ENCODE measurements at regions of chr14 and their contacts with region 1.

Region 1: DNA sequence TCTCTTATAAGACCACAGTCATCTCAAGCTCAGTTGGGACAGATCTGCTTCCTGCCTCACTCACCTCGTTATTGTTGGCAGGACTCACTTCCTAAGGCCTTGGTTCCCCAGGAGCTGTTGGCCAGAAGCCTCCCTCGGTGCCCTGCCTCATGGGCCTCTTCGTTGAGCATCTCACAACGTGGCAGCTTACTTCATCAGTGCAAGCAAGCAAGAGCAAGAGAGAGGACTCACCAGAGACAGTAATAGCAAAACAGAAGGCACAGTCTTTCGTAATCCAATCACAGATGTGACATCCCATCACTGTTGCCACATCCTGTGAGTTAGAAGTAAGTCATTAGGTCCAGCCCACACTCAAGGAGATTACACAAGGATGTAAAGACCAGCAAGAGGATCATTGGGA is 5.1 kb upstream of the NUMB start:
- DNase-seq: peak; percentile 56
- ATAC-seq: no peak
- H3K4me3 Mint-ChIP-seq: no peak overlapping the region
- H3K27ac Mint-ChIP-seq: peak overlapping the region; percentile 77
- H3K4me1 Mint-ChIP-seq: peaks cover 56% of the 10 kb centered on the region
- H3K27me3 Mint-ChIP-seq: peaks cover 3% of the 10 kb centered on the region

Region 2: DNA sequence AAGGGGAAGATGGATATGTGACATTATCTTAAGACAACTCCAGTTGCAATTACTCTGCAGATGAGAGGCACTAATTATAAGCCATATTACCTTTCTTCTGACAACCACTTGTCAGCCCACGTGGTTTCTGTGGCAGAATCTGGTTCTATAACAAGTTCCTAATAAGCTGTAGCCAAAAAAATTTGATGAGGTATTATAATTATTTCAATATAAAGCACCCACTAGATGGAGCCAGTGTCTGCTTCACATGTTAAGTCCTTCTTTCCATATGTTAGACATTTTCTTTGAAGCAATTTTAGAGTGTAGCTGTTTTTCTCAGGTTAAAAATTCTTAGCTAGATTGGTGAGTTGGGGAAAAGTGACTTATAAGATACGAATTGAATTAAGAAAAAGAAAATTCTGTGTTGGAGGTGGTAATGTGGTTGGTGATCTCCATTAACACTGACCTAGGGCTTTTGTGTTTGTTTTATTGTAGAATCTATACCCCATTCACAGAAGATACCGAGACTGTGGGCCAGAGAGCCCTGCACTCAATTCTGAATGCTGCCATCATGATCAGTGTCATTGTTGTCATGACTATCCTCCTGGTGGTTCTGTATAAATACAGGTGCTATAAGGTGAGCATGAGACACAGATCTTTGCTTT is 290.2 kb before region 1 on chr14:
- CTCF ChIA-PET with region 1: interaction called, 16 read pairs
- POLR2A ChIA-PET with region 1: no interaction called
- DNase-seq: peak; percentile 30
- ATAC-seq: peak; percentile 30
- H3K4me3 Mint-ChIP-seq: no peak overlapping the region
- H3K27ac Mint-ChIP-seq: no peak overlapping the region
- H3K4me1 Mint-ChIP-seq: peaks cover 3% of the 10 kb centered on the region
- H3K27me3 Mint-ChIP-seq: no peaks in the 10 kb centered on the region

Region 3: DNA sequence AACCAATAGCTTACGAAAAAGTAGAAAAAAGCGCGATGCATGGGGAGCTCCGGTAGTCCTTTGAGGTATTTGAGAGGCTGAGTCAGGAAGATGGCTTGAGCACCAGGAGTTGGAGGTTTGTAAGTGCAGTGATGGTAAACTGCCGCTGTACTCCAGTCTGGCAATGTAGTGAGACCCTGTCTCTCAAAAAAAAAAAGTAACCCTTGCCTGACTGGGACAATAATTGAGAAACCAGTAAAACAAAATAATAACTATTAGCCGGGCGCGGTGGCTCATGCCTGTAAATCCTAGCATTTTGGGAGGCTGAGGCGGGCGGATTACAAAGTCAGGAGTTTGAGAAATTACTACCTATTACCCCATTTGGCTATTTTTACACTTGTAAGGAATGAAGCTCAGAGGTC is 105.0 kb after region 1 on chr14:
- CTCF ChIA-PET with region 1: no interaction called
- POLR2A ChIA-PET with region 1: no interaction called
- DNase-seq: peak; percentile 34
- ATAC-seq: no peak
- H3K4me3 Mint-ChIP-seq: peak overlapping the region; percentile 92
- H3K27ac Mint-ChIP-seq: peak overlapping the region; percentile 98
- H3K4me1 Mint-ChIP-seq: peaks cover 36% of the 10 kb centered on the region
- H3K27me3 Mint-ChIP-seq: no peaks in the 10 kb centered on the region